GM18951 (cell line): ENCODE measurements at regions of chr4 and their contacts with region 1.

Region 1: DNA sequence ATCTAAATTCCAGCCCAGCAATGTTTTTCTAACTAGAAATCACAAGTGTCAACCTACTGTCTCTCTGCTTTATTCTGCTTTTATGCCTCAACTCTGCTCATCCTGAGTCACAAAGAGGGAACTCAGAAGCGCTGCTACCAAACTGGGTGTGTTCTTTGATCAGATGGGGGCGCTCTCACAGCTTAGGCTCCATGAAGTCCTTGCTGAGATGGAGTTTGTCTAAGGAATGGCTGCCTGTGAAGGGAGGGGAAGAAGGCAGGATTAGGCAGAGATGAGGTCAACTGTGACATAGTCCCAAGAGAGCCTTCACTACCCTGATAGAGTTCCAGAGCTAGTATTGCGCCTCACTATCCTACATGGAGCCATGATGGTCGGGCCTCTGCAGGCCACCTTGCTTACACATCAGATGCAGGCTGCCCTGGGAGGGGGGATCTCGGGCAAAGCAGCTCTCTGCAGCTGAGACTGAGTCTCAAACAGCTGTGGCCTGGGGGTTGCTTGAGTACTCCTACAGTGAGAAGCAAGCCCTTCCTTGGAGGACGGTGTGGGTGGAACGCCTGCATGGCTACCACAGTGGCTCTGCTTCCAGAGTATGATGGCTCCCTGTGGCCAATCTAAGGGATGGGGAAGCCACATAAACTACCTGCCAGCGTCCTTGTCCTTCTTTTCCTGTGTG is 219.9 kb downstream of the CCNG2 start:
- POLR2A ChIP-seq: no peak

Region 2: DNA sequence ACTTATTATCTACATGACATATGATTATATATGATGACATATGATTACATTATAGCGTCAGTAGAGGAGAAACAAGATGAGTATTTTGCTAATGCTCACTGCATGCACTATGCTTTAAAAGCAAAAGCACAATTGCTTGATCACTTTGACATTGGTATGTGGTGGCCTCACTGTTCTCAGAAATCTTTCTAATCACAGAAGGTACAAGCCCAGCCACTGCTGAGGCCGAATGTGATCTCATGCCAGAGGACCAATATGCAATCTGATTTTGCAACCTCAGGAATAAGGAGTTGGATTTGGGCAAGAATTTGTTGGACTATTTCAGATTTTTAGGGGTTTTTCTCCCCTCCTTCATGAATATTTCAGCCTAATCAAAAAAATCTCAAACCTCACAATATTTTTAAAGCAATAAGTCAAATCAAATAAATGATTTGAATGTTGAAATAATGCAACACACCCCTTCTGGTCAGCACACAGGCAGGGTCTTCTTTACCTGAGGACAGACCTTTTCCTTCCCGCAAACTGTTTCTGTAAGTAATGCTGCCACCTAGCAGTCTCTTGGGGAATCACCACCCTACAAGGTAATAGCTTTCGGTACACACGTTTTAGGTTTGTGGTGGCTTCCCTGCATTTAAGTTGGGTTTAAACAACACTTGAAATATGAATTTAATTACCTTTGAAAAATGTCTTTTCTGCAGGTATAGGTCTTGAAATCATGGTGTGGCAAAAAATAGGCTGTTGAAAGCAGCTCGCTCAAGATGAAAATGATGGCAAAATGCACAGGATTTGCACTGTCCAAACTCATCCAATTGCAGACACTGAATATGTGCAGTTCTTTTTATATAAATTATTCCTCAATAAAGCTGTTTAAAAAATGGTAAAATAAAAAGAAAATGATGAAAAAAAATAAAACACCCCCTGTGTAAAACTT is 223.9 kb after region 1 on chr4:
- in situ Hi-C with region 1: loop called (anchors 10 kb)
- POLR2A ChIP-seq: no peak